Naive thymus-derived CD4-positive, alpha-beta T cell (primary cell): ENCODE measurements at regions of chr15 and their contacts with region 1.

Region 1: DNA sequence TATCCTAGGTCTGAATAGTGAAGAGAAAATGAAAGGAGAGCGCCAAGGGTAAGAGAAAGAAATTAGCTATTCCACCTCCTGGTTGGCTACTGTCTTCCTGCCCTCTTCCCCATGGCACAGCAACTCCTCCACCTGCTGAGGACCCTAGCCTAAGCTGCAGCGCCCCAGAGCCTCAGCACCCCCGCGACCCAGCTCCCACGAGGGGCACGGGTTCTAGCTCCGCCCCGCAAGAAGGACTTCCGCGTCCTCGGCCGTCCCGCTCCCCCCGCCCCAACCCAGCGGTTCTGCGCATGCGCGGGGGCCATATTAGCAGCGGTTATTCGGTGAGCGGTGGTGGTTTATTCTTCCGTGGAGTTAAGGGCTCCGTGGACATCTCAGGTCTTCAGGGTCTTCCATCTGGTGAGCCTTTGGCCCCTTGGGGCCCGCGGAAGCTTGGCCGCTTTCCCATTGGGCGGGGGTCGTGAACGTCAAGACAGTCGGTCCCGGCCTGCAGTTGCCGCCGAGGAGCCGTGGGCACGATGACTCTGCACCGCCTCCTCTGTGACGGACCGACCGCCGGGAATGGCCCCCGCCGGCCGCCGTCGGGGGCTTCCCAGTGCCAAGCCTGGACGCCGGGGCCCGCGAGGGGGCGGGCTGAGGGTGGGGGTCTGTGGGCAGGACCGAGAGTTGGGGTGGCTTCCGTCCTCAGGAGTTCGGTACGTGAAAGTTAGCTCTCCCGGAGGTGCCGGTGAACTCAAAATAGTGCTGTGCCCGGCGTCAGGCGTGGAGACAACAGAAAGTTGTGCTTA is at the start of gene PSMA4:
- DNase-seq: peak; percentile 89 to 97 (median 95)
- ATAC-seq: peak; percentile 93
- H3K4me3 ChIP-seq: peak within 1 kb of the TSS; percentile 89
- H3K4me3 Mint-ChIP-seq: peak within 1 kb of the TSS; percentile 86 to 99 (median 92)
- H3K27ac ChIP-seq: peak within 1 kb of the TSS; percentile 99
- H3K27ac Mint-ChIP-seq: peak within 1 kb of the TSS; percentile 91 to 100 (median 99)
- H3K4me1 ChIP-seq: peaks cover 19 to 23% of the 10 kb centered on the region in 2 donors
- H3K4me1 Mint-ChIP-seq: peaks cover 18 to 47% (median 35%) of the 10 kb centered on the region in 7 donors
- H3K27me3 ChIP-seq: no peaks in the 10 kb centered on the region
- H3K27me3 Mint-ChIP-seq: peaks cover 0 to 4% (median 0%) of the 10 kb centered on the region in 5 donors
- total RNA-seq, gene PSMA4: 69.6 to 284 (median 79.9) TPM

Region 2: DNA sequence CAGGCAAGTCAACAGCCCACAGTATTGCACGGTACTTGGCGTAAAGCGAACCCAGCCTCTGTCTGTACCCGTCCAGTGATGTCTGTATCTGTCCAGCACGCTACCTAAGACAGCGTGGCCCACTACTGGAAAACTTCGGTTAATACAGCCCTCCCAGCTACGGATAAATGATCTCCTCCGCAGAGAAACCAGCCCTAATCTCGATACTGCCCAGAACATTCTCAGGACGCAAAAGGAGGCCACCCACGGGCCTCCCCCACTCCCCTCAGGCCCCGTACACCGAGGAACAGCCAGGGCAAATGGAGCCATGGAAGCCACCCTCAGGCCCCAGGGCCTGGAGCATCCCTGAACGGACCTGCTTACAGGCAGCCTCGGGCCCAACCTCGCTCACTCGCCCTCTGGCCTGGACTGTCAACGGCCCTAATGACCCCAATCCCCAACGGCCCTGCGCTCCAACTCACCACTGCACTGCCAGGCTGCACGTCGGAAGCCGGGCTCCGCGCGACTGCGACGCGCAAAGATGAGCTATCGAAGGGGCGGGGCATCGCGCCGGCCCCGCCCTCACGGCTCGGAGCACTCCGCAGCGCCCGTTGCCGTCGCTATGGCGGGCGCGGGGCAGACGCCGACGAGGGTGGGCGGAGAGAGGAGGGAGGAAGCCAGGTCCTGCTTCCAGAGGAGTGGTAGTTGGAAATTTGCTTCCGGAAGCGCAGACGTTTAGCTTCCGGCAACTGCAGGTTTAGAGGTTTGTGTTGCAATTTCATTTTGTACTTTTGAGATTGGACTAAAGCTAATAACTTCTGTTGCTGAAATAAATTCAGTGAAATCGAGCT is 241.0 kb before region 1 on chr15 and contains the start of gene SKIC8:
- CTCF ChIA-PET with region 1: no interaction called
- POLR2A ChIA-PET with region 1: interaction called, 3 read pairs
- intact Hi-C with region 1: loop called in 1 of 2 experiments (anchors 2 kb)
- DNase-seq: peak; percentile 84 to 92 (median 91)
- ATAC-seq: peak; percentile 99
- H3K4me3 ChIP-seq: peak within 1 kb of the TSS; percentile 88
- H3K4me3 Mint-ChIP-seq: peak within 1 kb of the TSS; percentile 94 to 99 (median 97)
- H3K27ac ChIP-seq: peak within 1 kb of the TSS; percentile 80
- H3K27ac Mint-ChIP-seq: peak within 1 kb of the TSS; percentile 89 to 97 (median 94)
- H3K4me1 ChIP-seq: peaks cover 8 to 15% of the 10 kb centered on the region in 2 donors
- H3K4me1 Mint-ChIP-seq: peaks cover 12 to 41% (median 31%) of the 10 kb centered on the region in 7 donors
- H3K27me3 ChIP-seq: no peaks in the 10 kb centered on the region
- H3K27me3 Mint-ChIP-seq: no peaks in the 10 kb centered on the region
- total RNA-seq, gene SKIC8: 26.7 to 48.7 (median 43.6) TPM

Region 3: GRCh38 chr15:78506971-78507830 is 33.1 kb before region 1 on chr15 and contains the start of gene HYKK:
- CTCF ChIA-PET with region 1: no interaction called
- POLR2A ChIA-PET with region 1: interaction called, 20 read pairs
- intact Hi-C with region 1: loop called (anchors 1 kb)
- DNase-seq: peak; percentile 31 to 80 (median 71)
- ATAC-seq: peak; percentile 90
- H3K4me3 ChIP-seq: peak within 1 kb of the TSS; percentile 70
- H3K4me3 Mint-ChIP-seq: peak within 1 kb of the TSS; percentile 84 to 99 (median 93)
- H3K27ac ChIP-seq: peak within 1 kb of the TSS; percentile 53
- H3K27ac Mint-ChIP-seq: peak within 1 kb of the TSS; percentile 56 to 90 (median 85)
- H3K4me1 ChIP-seq: peaks cover 0 to 12% of the 10 kb centered on the region in 2 donors
- H3K4me1 Mint-ChIP-seq: peaks cover 9 to 44% (median 31%) of the 10 kb centered on the region in 7 donors
- H3K27me3 ChIP-seq: no peaks in the 10 kb centered on the region
- H3K27me3 Mint-ChIP-seq: peaks cover 0 to 16% (median 0%) of the 10 kb centered on the region in 5 donors
- total RNA-seq, gene HYKK: 1.4 to 7.3 (median 3.1) TPM

Region 4: GRCh38 chr15:78552597-78552996 is 12.3 kb after region 1 on chr15:
- CTCF ChIA-PET with region 1: interaction called, 3 read pairs
- POLR2A ChIA-PET with region 1: interaction called, 3 read pairs
- intact Hi-C with region 1: loop called in 1 of 2 experiments (anchors 1 kb)
- DNase-seq: no peak
- ATAC-seq: no peak
- H3K4me3 ChIP-seq: no peak overlapping the region
- H3K4me3 Mint-ChIP-seq: no peak overlapping the region
- H3K27ac ChIP-seq: no peak overlapping the region
- H3K27ac Mint-ChIP-seq: peak overlapping the region in 1 of 9 donors; percentile 17
- H3K4me1 ChIP-seq: no peaks in the 10 kb centered on the region
- H3K4me1 Mint-ChIP-seq: peaks cover 0 to 4% (median 0%) of the 10 kb centered on the region in 7 donors
- H3K27me3 ChIP-seq: no peaks in the 10 kb centered on the region
- H3K27me3 Mint-ChIP-seq: peaks cover 0 to 6% (median 0%) of the 10 kb centered on the region in 5 donors

Region 5: DNA sequence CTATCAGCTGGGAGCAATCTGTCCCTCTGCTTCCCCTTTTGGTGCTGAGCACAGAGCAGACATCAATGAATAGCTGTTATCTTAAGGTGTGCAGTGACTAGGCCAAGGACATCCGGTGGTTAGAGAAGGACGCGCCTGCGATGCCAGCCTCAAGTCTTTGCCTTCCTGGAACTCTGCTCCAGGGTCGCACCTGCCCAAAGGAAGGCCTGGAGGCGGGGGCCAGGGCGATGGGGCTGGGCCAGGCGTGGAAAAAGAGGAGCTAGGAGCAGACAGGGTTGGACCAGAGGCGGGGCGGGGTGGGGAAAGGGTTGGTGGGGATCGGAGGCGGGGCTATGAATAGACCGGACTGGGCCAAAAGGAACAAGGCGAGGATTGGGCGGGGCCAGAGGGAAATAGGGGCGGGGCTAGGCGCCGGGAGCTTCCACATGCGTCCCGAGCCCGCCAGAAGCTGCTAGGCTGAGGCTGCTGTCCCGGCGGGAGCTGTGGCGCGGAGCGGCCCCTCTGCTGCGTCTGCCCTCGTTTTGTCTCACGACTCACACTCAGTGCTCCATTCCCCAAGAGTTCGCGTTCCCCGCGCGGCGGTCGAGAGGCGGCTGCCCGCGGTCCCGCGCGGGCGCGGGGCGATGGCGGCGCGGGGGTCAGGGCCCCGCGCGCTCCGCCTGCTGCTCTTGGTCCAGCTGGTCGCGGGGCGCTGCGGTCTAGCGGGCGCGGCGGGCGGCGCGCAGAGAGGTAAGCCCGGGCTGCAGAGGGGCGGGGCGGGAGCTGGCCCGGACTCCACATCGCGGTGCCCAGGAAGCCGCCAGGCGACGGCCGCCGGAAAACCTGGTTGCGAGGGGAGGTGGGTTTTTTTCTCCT is 25.0 kb after region 1 on chr15 and contains the start of gene CHRNA5:
- CTCF ChIA-PET with region 1: no interaction called
- POLR2A ChIA-PET with region 1: interaction called, 10 read pairs
- intact Hi-C with region 1: loop called (anchors 1 to 2 kb)
- DNase-seq: peak in 8 of 9 donors; percentile 4 to 72 (median 20)
- ATAC-seq: peak; percentile 74
- H3K4me3 ChIP-seq: peak within 1 kb of the TSS; percentile 61
- H3K4me3 Mint-ChIP-seq: peak within 1 kb of the TSS; percentile 80 to 94 (median 88)
- H3K27ac ChIP-seq: no peak within 1 kb of the TSS
- H3K27ac Mint-ChIP-seq: peak within 1 kb of the TSS in 8 of 9 donors; percentile 1 to 65 (median 47)
- H3K4me1 ChIP-seq: peaks cover 6 to 14% of the 10 kb centered on the region in 2 donors
- H3K4me1 Mint-ChIP-seq: peaks cover 13 to 26% (median 20%) of the 10 kb centered on the region in 7 donors
- H3K27me3 ChIP-seq: peaks cover 0 to 6% of the 10 kb centered on the region in 2 donors
- H3K27me3 Mint-ChIP-seq: peaks cover 6 to 40% (median 24%) of the 10 kb centered on the region in 5 donors
- total RNA-seq, gene CHRNA5: 0.10 to 3.4 (median 0.76) TPM in 4 of 5 experiments, not detected in the other

Region 6: GRCh38 chr15:78604420-78604819 is 64.1 kb after region 1 on chr15:
- CTCF ChIA-PET with region 1: no interaction called
- POLR2A ChIA-PET with region 1: no interaction called
- intact Hi-C with region 1: no loop called
- DNase-seq: no peak
- ATAC-seq: no peak
- H3K4me3 ChIP-seq: no peak overlapping the region
- H3K4me3 Mint-ChIP-seq: no peak overlapping the region
- H3K27ac ChIP-seq: no peak overlapping the region
- H3K27ac Mint-ChIP-seq: no peak overlapping the region
- H3K4me1 ChIP-seq: no peaks in the 10 kb centered on the region
- H3K4me1 Mint-ChIP-seq: peaks cover 0 to 1% (median 0%) of the 10 kb centered on the region in 7 donors
- H3K27me3 ChIP-seq: no peaks in the 10 kb centered on the region
- H3K27me3 Mint-ChIP-seq: peaks cover 6 to 38% (median 16%) of the 10 kb centered on the region in 5 donors